ENCODE measurements at regions of chr11 and their contacts with region 1.

Region 1: GRCh38 chr11:110032259-110032658 is 60.9 kb upstream of the ZC3H12C start:
- DNase-seq: no peak
- H3K4me3 ChIP-seq: peak overlapping the region in 12 of 59 donors; percentile 8 to 39 (median 22)
- H3K27ac ChIP-seq: peak overlapping the region in 47 of 59 donors; percentile 2 to 80 (median 54)
- H3K27me3 ChIP-seq: no peaks in the 10 kb centered on the region
- CTCF ChIP-seq: no peak

Region 2: GRCh38 chr11:110071197-110071596 is 38.9 kb after region 1 on chr11:
- intact Hi-C with region 1: loop called in 1 of 2 experiments (anchors 5 kb)
- DNase-seq: no peak
- H3K4me3 ChIP-seq: no peak overlapping the region
- H3K27ac ChIP-seq: no peak overlapping the region
- H3K27me3 ChIP-seq: no peaks in the 10 kb centered on the region
- CTCF ChIP-seq: no peak